ENCODE measurements at regions of chr5 and their contacts with region 1.

Region 1: DNA sequence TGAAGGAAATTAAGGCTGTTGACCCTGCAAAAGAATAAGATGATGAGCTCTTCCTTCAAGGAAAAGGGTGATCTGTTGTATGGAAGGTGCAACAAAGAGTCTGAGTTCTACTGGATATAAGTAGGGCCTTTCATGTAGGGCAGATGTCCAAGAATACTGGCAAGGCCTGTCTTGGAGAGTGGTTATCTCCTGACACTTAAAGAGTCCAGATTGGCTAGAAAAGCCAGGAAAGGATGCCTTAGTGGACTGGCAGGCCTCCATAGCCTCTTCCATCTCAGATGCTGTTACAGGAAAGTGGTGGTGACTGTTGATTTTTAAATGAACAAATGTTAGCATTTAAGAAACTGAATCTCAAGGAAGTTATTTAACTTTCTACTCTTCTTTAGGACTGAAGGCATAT is 396.2 kb downstream of the RAB3C start:
- DNase-seq: no peak
- ATAC-seq: peak in 2 of 4 donors; percentile 49 to 76
- H3K4me3 ChIP-seq: no peak overlapping the region
- H3K27ac ChIP-seq: no peak overlapping the region
- H3K4me1 ChIP-seq: peaks cover 0 to 19% (median 4%) of the 10 kb centered on the region in 12 donors
- H3K27me3 ChIP-seq: no peaks in the 10 kb centered on the region
- CTCF ChIP-seq: no peak
- POLR2A ChIP-seq: no peak

Region 2: DNA sequence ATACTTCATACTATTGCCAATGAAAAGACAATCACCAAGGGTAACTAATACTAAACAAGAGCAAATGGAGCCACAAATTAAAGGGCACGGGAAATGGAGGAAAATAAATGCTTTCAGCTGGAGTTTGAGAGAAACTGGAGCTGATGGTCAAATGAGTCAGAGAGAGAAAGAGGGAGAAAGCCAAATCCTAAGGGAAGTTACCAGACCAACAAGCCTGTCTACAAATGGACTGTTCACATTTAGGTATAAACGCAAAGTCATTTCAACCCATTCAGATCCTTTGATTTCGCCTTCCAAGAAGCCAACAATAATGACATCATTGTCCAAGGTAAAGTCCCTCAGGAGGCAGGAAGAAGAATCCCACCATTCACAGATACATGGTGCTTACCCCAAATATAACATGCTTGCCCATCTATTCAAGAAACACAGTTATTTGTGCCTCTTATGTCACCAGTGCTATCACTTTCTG is 44.4 kb before region 1 on chr5:
- intact Hi-C with region 1: loop called in 1 of 10 experiments (anchors 5 kb)
- DNase-seq: no peak
- ATAC-seq: no peak
- H3K4me3 ChIP-seq: no peak overlapping the region
- H3K27ac ChIP-seq: no peak overlapping the region
- H3K4me1 ChIP-seq: peaks cover 0 to 6% (median 0%) of the 10 kb centered on the region in 12 donors
- H3K27me3 ChIP-seq: peaks cover 0 to 3% (median 0%) of the 10 kb centered on the region in 9 donors
- CTCF ChIP-seq: no peak
- POLR2A ChIP-seq: no peak

Region 3: GRCh38 chr5:59367791-59368394 is 388.8 kb after region 1 on chr5:
- intact Hi-C with region 1: no loop called
- DNase-seq: peak in 4 of 5 donors; percentile 34 to 68 (median 59)
- ATAC-seq: peak; percentile 48 to 79 (median 71)
- H3K4me3 ChIP-seq: no peak overlapping the region
- H3K27ac ChIP-seq: no peak overlapping the region
- H3K4me1 ChIP-seq: peaks cover 0 to 12% (median 0%) of the 10 kb centered on the region in 12 donors
- H3K27me3 ChIP-seq: no peaks in the 10 kb centered on the region
- CTCF ChIP-seq: peak; percentile 65 to 86 (median 80)
- POLR2A ChIP-seq: no peak

Measured in heart left ventricle (tissue), 16 donors.